ENCODE measurements at regions of chr12 and their contacts with region 1.

Region 1: DNA sequence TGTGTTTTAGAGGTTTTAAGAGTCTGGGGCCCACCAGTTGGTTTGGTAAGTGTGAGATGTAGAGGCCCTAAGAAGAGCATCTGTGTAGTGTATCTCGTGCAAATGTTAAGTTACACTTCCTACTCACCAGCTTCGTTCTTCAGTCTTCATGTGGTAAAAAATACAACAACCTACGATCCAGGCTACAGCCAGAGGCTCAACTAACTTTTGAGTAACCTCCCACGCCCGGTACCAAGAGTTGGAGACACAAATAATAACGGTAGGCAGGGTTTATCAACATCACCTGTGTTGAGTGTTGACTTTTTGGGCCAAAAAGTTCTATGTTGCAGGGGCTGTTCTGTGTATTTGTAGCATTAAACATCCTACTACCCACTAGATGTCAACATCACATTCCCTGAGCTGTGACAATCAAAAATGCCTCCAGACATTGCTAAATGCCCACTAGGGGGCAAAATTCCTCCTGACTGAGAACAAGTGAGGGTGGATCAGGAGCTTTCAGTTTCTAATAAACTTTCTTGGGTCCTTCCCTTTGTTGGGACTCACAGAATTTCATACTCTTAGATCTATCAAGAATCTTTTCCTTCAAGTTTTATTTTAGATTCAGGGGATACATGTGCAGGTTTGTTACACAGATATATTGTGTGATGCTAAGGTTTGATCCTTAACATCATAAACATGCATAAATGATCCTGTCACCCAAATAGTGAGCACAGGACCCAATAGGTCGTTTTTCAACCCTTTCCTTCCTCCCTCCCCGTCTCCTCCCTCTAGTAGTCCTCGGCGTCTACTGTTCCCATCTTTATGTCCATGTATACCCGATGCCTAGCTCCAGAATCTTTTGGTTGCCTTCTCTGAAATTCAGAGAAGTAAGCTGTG is 94.7 kb downstream of the SLC2A13 start:
- DNase-seq: peak; percentile 48
- ATAC-seq: peak; percentile 92
- H3K4me3 Mint-ChIP-seq: no peak overlapping the region; the same call in 1 of the 2 replicates
- H3K27ac Mint-ChIP-seq: peak overlapping the region; percentile 53; the same call in 1 of the 2 replicates
- H3K4me1 Mint-ChIP-seq: peaks cover 36% of the 10 kb centered on the region
- H3K27me3 Mint-ChIP-seq: no peaks in the 10 kb centered on the region
- CTCF ChIP-seq: peak; percentile 57

Region 2: GRCh38 chr12:39990122-39991101 is 20.7 kb before region 1 on chr12:
- CTCF ChIA-PET with region 1: interaction called, 16 read pairs
- POLR2A ChIA-PET with region 1: no interaction called
- DNase-seq: peak; percentile 57
- ATAC-seq: peak; percentile 56
- H3K4me3 Mint-ChIP-seq: no peak overlapping the region
- H3K27ac Mint-ChIP-seq: no peak overlapping the region
- H3K4me1 Mint-ChIP-seq: peaks cover 18% of the 10 kb centered on the region
- H3K27me3 Mint-ChIP-seq: no peaks in the 10 kb centered on the region
- CTCF ChIP-seq: peak; percentile 72

Region 3: GRCh38 chr12:40032433-40033241 is 21.5 kb after region 1 on chr12:
- CTCF ChIA-PET with region 1: interaction called, 31 read pairs
- POLR2A ChIA-PET with region 1: no interaction called
- DNase-seq: peak; percentile 62
- ATAC-seq: peak; percentile 90
- H3K4me3 Mint-ChIP-seq: no peak overlapping the region
- H3K27ac Mint-ChIP-seq: peak overlapping the region; percentile 89
- H3K4me1 Mint-ChIP-seq: peaks cover 65% of the 10 kb centered on the region
- H3K27me3 Mint-ChIP-seq: no peaks in the 10 kb centered on the region
- CTCF ChIP-seq: no peak

Region 4: GRCh38 chr12:40038619-40039018 is 27.5 kb after region 1 on chr12:
- CTCF ChIA-PET with region 1: interaction called, 31 read pairs
- POLR2A ChIA-PET with region 1: no interaction called
- DNase-seq: no peak
- ATAC-seq: no peak
- H3K4me3 Mint-ChIP-seq: no peak overlapping the region
- H3K27ac Mint-ChIP-seq: no peak overlapping the region
- H3K4me1 Mint-ChIP-seq: peaks cover 24% of the 10 kb centered on the region
- H3K27me3 Mint-ChIP-seq: no peaks in the 10 kb centered on the region
- CTCF ChIP-seq: no peak

Region 5: GRCh38 chr12:40107098-40107802 is 96.1 kb after region 1 on chr12:
- CTCF ChIA-PET with region 1: interaction called, 48 read pairs
- POLR2A ChIA-PET with region 1: interaction called, 7 read pairs
- DNase-seq: peak; percentile 87
- ATAC-seq: no peak
- H3K4me3 Mint-ChIP-seq: peak overlapping the region; percentile 27; the same call in 1 of the 2 replicates
- H3K27ac Mint-ChIP-seq: no peak overlapping the region
- H3K4me1 Mint-ChIP-seq: peaks cover 40% of the 10 kb centered on the region
- H3K27me3 Mint-ChIP-seq: peaks cover 11% of the 10 kb centered on the region
- CTCF ChIP-seq: peak; percentile 87

Measured in WTC11 (cell line).